PC-3 (cell line): ENCODE measurements at regions of chr19 and their contacts with region 1.

Region 1: DNA sequence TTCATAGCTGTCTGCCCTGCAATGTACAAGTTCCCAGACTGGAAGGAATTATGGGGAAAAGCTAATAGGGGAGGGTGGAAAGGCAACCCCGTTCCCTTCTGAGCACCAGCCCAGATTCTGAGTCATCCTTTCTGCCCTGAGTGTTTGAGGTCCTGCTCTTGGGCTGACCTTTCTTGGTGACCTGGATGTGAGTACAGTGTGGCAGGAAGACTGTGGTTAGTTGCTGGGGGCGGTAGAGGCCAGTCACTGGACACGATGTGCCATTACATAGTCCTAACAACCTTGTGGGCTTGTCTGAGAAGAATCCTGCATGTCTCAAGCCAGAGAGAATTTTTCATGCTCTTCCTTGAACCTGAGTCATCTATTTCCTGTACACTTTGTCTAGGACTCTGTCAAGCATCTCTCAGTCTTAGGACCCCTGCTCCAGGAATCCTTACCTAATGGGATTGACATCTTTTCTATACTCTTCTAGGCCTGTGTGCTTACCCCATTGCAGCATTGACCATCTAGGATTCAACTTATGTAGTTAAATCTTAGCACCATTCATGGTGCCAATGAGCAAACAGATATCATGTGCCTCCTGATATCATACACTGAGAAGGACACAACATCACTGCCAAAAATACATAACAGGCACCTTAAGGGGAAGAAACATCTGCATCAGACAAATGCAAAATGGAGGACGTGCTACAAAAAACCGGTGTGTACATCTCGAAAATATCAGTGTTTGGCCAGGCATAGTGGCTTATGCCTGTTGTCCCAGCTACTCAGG is 8.1 kb upstream of the ANGPTL4 start:
- DNase-seq: peak; percentile 97
- ATAC-seq: peak; percentile 93
- H3K4me3 ChIP-seq: no peak overlapping the region
- H3K27ac ChIP-seq: peak overlapping the region; percentile 50
- H3K4me1 ChIP-seq: peaks cover 21% of the 10 kb centered on the region
- H3K27me3 ChIP-seq: no peaks in the 10 kb centered on the region
- CTCF ChIP-seq: 0 out of 2 replicates have a peak, but pooled peaks have one; percentile 19

Region 2: DNA sequence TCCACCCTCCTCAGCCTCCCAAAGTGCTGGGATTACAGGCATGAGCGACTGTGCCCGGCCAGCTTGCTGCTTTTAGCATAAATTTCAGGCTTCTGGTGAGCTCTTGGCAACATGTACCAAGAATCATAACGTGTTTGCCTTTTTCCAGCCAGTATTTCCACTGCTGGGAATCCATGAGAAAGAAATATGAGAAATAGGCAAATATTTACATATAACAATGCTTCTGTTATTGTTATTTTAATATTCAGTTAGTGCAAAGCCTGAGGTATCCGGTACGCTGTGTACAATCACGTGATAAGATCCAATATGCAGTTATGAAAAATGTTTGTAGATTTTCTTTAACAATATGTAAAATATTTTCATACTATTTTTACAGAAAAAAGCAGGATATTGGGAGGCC is 175.8 kb before region 1 on chr19:
- CTCF ChIA-PET with region 1: no interaction called
- POLR2A ChIA-PET with region 1: no interaction called
- intact Hi-C with region 1: no loop called
- DNase-seq: peak; percentile 50
- ATAC-seq: peak; percentile 75
- H3K4me3 ChIP-seq: no peak overlapping the region
- H3K27ac ChIP-seq: no peak overlapping the region
- H3K4me1 ChIP-seq: peaks cover 3% of the 10 kb centered on the region; the same call in 1 of the 2 replicates
- H3K27me3 ChIP-seq: no peaks in the 10 kb centered on the region
- CTCF ChIP-seq: no peak

Region 3: DNA sequence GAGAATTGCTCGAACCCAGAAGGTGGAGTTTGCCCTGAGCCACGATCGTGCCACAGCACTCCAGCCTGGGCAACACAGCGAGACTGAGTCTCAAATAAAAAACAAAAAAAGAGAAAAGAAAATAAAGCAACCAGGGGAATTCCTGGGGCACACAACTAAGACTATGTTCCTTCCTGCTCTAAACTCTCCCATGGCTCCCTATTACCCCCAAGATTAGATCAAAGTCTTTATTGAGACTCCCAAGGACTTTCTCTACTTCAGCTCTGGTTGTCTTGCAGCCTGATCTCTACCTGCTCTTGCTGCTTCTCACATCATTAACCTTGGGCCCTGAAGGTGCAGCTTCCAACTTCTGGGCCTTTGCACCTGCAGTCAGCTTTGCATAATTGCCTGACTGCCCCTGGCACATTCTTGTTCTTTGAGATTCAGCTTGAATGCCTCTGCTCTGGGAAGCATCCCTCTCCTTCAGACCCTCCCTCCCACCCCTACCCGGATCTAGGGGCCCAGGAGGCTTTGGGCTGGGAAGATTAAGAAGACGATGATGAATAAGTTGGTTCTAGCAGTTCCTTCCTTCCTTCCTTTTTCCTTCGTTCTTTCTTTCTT is 163.5 kb before region 1 on chr19:
- CTCF ChIA-PET with region 1: no interaction called
- POLR2A ChIA-PET with region 1: no interaction called
- intact Hi-C with region 1: no loop called
- DNase-seq: no peak
- ATAC-seq: no peak
- H3K4me3 ChIP-seq: no peak overlapping the region
- H3K27ac ChIP-seq: no peak overlapping the region
- H3K4me1 ChIP-seq: no peaks in the 10 kb centered on the region
- H3K27me3 ChIP-seq: no peaks in the 10 kb centered on the region
- CTCF ChIP-seq: no peak

Region 4: GRCh38 chr19:8334458-8335342 is 21.1 kb before region 1 on chr19:
- CTCF ChIA-PET with region 1: no interaction called
- POLR2A ChIA-PET with region 1: no interaction called
- intact Hi-C with region 1: no loop called
- DNase-seq: peak; percentile 87
- ATAC-seq: peak; percentile 70
- H3K4me3 ChIP-seq: peak overlapping the region; percentile 66
- H3K27ac ChIP-seq: no peak overlapping the region
- H3K4me1 ChIP-seq: peaks cover 11% of the 10 kb centered on the region; the same call in 1 of the 2 replicates
- H3K27me3 ChIP-seq: peaks cover 22% of the 10 kb centered on the region
- CTCF ChIP-seq: no peak

Region 5: DNA sequence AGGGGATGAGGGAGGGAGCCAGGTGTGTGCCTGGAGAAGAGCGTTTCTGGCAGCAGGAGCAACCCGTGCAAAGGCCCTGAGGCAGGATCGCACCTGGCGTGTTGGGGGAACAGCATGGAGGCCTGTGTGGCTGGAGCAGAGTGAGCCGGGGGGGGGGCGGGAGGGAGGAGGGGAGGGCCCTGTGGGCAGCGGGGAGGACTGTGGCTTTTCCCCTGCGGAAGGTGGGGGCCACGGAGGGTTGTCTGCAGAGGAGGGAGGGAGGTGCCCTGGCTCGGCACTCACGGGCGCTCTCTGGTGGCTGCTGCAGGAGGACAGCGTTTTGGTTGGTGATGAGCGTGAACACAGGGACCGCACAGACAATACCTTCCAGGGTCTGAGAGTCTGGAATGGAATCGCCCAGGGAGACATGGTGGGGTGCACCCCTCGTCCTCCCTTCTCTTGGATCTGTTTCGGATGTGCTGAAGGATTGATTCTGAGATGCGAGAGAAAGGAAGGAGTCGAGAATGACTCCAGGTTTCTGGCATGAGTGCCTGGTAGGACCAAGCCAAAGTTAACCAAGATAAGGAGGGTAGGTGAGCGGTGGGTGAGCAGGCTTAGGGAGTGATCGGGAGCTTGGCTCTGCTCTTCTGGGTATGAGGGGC is 40.9 kb after region 1 on chr19:
- CTCF ChIA-PET with region 1: interaction called, 4 read pairs
- POLR2A ChIA-PET with region 1: no interaction called
- intact Hi-C with region 1: loop called (anchors 1 kb)
- DNase-seq: peak; percentile 72
- ATAC-seq: peak; percentile 56
- H3K4me3 ChIP-seq: no peak overlapping the region
- H3K27ac ChIP-seq: no peak overlapping the region
- H3K4me1 ChIP-seq: peaks cover 9% of the 10 kb centered on the region
- H3K27me3 ChIP-seq: no peaks in the 10 kb centered on the region
- CTCF ChIP-seq: peak; percentile 83

Region 6: DNA sequence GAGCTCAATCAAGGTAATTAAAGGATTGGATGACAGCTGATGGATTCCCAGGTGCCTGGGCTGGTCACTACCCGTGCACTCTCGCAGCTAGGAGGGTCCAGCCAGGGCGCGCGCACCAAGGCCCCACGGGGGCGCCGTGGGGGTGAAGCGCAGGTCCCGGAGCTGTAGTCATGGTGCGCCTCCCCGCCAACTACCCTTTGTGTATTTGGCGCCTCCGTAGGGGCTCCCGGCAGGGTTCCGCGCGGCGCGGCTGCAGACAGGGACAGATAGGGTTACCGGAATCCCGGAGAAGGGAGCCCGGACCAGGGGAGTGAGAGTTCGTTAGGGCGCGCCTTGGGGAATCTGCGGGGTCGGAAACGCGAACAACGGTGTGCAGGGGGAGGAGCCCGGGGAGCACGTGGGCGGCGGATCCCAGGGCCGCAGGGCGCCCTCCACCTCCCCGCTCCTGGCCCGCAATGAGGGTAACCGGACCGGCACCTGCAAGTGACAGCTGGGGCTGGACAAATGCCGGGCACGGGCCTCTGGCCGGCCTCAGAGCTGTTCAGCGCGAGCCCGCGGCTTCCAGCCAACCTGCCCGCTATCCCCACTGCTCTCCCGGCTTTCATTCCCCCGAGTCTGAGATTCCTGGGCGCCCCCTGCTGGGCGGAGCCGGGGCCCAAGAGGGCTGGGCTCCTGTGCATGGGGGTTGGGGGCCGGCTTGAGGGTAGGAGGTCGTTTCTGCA is 150.0 kb after region 1 on chr19:
- CTCF ChIA-PET with region 1: interaction called, 6 read pairs
- POLR2A ChIA-PET with region 1: no interaction called
- intact Hi-C with region 1: loop called (anchors 2 kb)
- DNase-seq: peak; percentile 87
- ATAC-seq: peak; percentile 90
- H3K4me3 ChIP-seq: peak overlapping the region; percentile 76
- H3K27ac ChIP-seq: peak overlapping the region; percentile 1; the same call in 1 of the 2 replicates
- H3K4me1 ChIP-seq: no peaks in the 10 kb centered on the region
- H3K27me3 ChIP-seq: no peaks in the 10 kb centered on the region
- CTCF ChIP-seq: peak; percentile 99